Aorta (tissue), 5 donors: ENCODE measurements at regions of chr12 and their contacts with region 1.

Region 1: DNA sequence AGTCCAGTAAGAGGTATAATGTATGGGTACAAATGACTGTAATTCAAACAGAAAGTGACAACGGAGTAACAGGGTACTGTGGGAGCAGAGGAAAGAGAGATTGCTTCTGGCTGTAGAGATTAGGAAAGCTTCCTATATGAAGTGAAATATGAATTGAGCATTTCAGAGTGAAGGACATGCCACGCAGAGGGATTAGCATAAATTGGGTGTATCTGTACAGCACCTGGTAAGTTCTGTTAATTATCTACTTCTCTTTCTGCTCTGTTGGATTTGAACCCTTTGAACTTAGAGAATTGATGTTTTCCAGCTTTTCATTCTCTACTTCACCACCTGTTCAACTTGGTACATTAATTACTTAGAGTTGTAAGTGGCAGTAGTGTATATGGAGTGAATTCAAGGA is 8.8 kb downstream of the STK38L start:
- DNase-seq: no peak
- ATAC-seq: no peak
- H3K4me3 ChIP-seq: no peak overlapping the region
- H3K27ac ChIP-seq: no peak overlapping the region
- H3K4me1 ChIP-seq: peaks cover 8 to 27% of the 10 kb centered on the region in 2 donors
- H3K27me3 ChIP-seq: no peaks in the 10 kb centered on the region

Region 2: GRCh38 chr12:27024291-27024690 is 228.6 kb before region 1 on chr12:
- intact Hi-C with region 1: loop called in 1 of 2 experiments (anchors 5 kb)
- DNase-seq: no peak
- ATAC-seq: no peak
- H3K4me3 ChIP-seq: no peak overlapping the region
- H3K27ac ChIP-seq: no peak overlapping the region
- H3K4me1 ChIP-seq: peaks cover 2 to 4% of the 10 kb centered on the region in 2 donors
- H3K27me3 ChIP-seq: no peaks in the 10 kb centered on the region

Region 3: GRCh38 chr12:27293463-27293862 is 40.5 kb after region 1 on chr12:
- intact Hi-C with region 1: loop called in 1 of 2 experiments (anchors 5 kb)
- DNase-seq: no peak
- ATAC-seq: peak; percentile 52
- H3K4me3 ChIP-seq: no peak overlapping the region
- H3K27ac ChIP-seq: peak overlapping the region; percentile 54 to 59
- H3K4me1 ChIP-seq: peaks cover 14 to 26% of the 10 kb centered on the region in 2 donors
- H3K27me3 ChIP-seq: no peaks in the 10 kb centered on the region